ENCODE measurements at regions of chr5 and their contacts with region 1.

Region 1: DNA sequence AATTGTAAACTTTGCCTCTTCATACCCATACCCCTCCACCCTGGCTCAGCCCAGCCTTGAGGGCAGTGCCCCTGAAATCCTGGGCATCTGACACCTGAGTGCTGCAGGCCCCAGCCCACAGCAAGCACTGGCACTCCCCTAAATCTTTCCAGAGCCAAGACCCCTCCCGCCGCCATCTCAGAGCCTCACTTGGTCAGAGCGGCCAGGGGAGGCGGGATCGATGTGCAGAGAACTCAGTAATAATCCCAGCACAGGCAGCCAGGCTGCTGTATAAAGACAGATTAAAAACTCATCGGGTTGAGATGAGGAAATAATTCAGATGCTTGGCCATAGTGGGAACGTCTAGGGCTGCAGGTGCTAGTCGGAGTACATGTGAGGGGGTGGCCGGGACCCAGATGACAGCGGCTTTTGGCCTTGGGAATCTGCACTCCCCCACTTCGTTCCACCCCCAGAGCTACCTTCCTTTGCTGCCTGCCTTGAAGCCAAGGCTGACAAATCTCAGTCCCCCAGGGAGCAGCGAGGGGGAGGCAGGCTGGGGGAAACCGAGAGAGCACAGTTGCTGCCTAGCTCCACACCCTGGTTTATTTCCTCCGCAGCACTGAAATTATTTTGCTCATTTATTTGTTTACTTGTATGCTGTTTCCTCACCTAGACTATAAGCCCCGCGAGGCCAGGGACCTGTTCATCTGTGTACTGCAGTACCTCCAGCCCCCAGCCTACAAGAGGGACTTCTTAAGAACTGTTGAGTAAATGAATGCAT is 19.5 kb upstream of the ARAP3 start:
- DNase-seq: no peak
- H3K4me3 ChIP-seq: no peak overlapping the region
- H3K4me1 ChIP-seq: no peaks in the 10 kb centered on the region; the same call in 1 of the 2 replicates
- H3K27me3 ChIP-seq: peaks cover 3% of the 10 kb centered on the region; the same call in 1 of the 2 replicates

Region 2: GRCh38 chr5:141878711-141879425 is 177.3 kb after region 1 on chr5:
- in situ Hi-C with region 1: loop called (anchors 5 kb)
- DNase-seq: peak; percentile 77 to 92
- H3K4me3 ChIP-seq: peak overlapping the region; percentile 41
- H3K4me1 ChIP-seq: peaks cover 10% of the 10 kb centered on the region
- H3K27me3 ChIP-seq: peaks cover 19% of the 10 kb centered on the region

Region 3: GRCh38 chr5:142537938-142538337 is 836.4 kb after region 1 on chr5:
- in situ Hi-C with region 1: no loop called
- DNase-seq: no peak
- H3K4me3 ChIP-seq: no peak overlapping the region
- H3K4me1 ChIP-seq: no peaks in the 10 kb centered on the region
- H3K27me3 ChIP-seq: no peaks in the 10 kb centered on the region; the same call in none of the 2 replicates